Activated T-helper 1 cell treated with anti-CD3 and anti-CD28 coated beads, Interleukin-12 subunit alpha, Interleukin-12 subunit beta, Interleukin-2, Interleukin-4 antibody, amounts not matched to agents 30 ng/mL and 10 ng/mL and 1 ng/mL, durations not matched to agents 14 hours and 24 hours and 36 hours (primary cell): ENCODE measurements at regions of chr9 and their contacts with region 1.

Region 1: DNA sequence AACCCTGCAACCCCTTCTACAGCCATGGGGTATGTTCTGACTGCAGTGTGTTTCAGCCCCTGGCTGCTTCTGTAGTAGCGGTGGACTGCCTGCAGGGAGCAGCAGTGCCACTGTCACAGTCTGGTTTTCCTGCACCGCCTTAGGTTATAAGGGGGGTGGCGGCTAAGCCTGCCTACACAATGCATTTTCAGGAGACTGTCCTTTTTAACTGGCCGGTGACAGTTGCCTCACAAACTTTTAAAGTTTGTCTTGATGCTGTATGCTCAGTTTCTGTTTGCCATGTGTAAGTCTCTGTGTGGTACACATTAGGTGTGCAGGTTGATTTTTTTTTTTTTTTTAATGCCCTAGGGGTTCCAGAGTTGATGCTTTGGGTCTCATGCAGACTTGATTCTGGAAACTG is 53.0 kb downstream of the NUP214 start:
- DNase-seq: peak; percentile 72
- H3K4me3 Mint-ChIP-seq: no peak overlapping the region
- H3K27ac Mint-ChIP-seq: no peak overlapping the region
- H3K4me1 Mint-ChIP-seq: peaks cover 16% of the 10 kb centered on the region
- H3K27me3 Mint-ChIP-seq: no peaks in the 10 kb centered on the region

Region 2: DNA sequence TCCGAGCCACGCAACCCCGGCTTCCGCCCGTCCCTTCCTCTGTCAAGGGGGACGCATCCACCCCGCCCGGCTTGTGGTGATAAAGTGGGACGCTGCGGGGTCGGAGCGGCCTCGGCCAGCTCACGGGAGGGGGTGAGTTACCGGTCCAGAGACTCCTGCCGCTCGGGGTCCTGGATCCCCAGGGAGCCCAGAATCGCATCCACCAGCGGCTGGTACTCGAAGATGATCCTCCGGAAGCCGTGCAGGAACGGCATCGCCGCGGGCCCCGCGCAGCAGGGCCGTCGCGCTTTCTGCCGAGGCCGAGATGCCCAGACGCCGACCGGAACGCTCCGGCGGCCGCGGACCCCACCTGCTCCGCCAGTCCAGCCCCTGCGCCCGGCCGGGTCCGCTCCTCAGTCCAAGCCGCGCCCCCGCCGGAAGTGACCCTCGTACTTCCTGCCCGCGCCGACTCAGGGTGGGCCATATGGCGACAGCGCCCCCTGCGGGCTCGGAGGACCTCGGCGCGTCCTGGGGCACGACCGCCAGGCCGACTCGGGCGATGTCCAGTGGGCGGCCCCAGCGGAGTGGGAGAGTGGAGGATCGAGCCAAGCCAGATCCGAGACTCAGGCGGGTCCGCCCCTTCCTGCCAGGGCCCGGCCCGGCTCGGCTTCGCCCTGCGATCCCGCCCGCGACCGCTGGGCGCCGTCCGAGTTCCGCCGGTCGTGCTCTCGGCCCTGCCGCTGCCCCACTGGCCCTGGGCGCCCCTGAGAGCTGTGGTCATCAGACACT is 1536.5 kb before region 1 on chr9 and contains the start of gene ASB6:
- intact Hi-C with region 1: no loop called
- DNase-seq: peak; percentile 94
- H3K4me3 Mint-ChIP-seq: peak within 1 kb of the TSS; percentile 87
- H3K27ac Mint-ChIP-seq: peak within 1 kb of the TSS; percentile 90
- H3K4me1 Mint-ChIP-seq: peaks cover 10% of the 10 kb centered on the region
- H3K27me3 Mint-ChIP-seq: peaks cover 2% of the 10 kb centered on the region
- total RNA-seq, gene ASB6: 24.0 TPM in 2 replicates

Region 3: GRCh38 chr9:131320031-131320685 is 141.8 kb after region 1 on chr9:
- intact Hi-C with region 1: no loop called
- DNase-seq: no peak
- H3K4me3 Mint-ChIP-seq: no peak overlapping the region
- H3K27ac Mint-ChIP-seq: no peak overlapping the region
- H3K4me1 Mint-ChIP-seq: no peaks in the 10 kb centered on the region
- H3K27me3 Mint-ChIP-seq: peaks cover 2% of the 10 kb centered on the region

Region 4: GRCh38 chr9:131334629-131335367 is 156.4 kb after region 1 on chr9:
- intact Hi-C with region 1: loop called (anchors 1 kb)
- DNase-seq: no peak
- H3K4me3 Mint-ChIP-seq: no peak overlapping the region
- H3K27ac Mint-ChIP-seq: no peak overlapping the region
- H3K4me1 Mint-ChIP-seq: peaks cover 4% of the 10 kb centered on the region
- H3K27me3 Mint-ChIP-seq: peaks cover 2% of the 10 kb centered on the region